SK-N-SH (cell line): ENCODE measurements at regions of chr4 and their contacts with region 1.

Region 1: DNA sequence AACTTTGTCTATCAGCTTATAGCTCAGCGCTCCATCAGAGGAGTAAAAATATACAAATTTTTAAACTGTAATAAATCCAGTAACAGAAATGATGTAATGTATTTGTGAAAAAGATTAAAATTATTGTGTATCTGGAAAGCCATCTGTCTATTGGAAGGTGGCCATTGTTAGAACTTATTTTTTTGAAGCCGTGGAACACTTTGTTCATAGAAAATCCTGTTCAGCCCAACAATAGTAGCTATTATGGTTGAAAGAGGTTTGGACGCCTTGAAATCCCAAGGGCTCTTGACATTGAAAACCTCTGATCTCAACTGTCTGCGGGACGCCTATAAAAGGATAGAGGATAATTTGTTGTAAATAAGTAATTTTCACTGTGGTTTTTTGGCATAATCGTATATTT is 98.3 kb downstream of the RAPGEF2 start:
- DNase-seq: no peak
- H3K4me3 ChIP-seq: no peak overlapping the region
- H3K27ac ChIP-seq: no peak overlapping the region
- H3K4me1 ChIP-seq: no peaks in the 10 kb centered on the region
- H3K27me3 ChIP-seq: no peaks in the 10 kb centered on the region
- CTCF ChIP-seq: no peak
- EP300 ChIP-seq: no peak
- RAD21 ChIP-seq: no peak

Region 2: DNA sequence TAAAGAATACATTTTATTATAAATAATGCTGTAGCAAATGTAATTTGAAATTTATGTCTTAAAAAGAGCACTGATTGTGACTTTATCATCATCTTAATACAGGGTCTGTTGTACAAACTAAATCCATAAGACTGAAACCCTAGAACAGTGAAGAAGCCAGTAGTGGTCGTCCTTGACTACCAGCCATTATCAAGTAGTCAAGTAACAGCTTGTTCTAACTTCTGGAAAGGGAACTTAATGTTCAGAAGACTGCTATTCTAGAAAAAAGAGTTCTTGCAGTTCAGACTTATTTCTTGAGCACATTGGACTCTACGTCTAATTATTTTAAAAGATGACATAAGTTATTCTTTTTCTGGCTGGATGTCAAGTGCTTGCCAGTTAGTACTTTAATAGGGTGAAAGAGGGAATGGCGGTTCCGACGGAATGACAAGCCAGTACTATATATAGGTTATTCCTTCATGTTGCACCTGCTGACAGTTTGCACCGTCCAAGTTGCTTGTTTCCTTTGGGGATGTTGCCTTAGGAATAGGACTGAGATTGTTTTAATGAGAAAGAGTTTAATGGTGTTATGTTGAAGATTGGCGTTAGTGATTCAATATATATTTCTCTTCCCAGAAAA is 11.6 kb after region 1 on chr4:
- CTCF ChIA-PET with region 1: interaction called, 47 read pairs
- POLR2A ChIA-PET with region 1: no interaction called
- DNase-seq: no peak
- H3K4me3 ChIP-seq: no peak overlapping the region
- H3K27ac ChIP-seq: no peak overlapping the region
- H3K4me1 ChIP-seq: no peaks in the 10 kb centered on the region; a peak in 1 of 4 replicates
- H3K27me3 ChIP-seq: no peaks in the 10 kb centered on the region
- CTCF ChIP-seq: no peak
- EP300 ChIP-seq: no peak
- RAD21 ChIP-seq: no peak